ENCODE measurements at regions of chr9 and their contacts with region 1.

Region 1: DNA sequence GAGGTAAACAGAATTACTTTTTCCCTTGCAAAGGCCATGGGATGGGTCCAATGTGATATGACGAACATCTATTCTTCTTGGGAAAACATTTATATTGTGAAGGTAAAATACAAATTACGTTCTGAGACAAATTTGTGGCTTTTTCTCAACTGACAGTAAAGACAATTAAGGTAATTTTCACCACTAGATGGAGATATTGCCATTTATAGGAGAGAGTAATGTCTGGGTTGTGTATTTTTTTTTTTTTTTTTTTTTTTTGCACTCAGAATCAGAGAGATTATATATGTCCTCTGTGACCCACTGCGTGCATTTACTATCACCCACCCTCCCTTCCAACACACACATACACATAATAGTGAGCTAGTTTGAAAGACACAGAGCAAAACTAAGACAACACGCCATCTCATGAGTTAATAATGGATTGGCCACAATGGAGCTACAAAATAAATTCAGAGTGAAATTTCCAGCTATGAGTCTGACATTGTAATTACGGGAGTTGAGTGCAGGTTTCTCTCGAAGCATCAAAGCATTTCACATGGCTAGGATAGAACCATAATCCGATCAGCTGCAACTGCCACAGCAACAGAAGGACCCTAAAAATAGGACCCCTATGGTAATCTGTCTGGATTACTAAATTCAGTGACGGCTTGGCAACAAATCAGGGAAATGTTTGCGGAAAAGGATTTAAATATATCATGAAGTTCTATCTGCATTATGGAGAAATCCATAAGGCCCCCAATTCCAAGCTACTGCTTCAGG is 49.2 kb downstream of the ANXA1 start:
- DNase-seq: peak in 1 of 2 experiments; percentile 44
- ATAC-seq: peak; percentile 70 to 84; a peak in 5 of 6 replicates
- H3K4me3 ChIP-seq: no peak overlapping the region
- H3K27ac ChIP-seq: no peak overlapping the region
- H3K4me1 ChIP-seq: peaks cover 22% of the 10 kb centered on the region; the same call in 2 of the 3 replicates
- CTCF ChIP-seq: peak; percentile 83
- EP300 ChIP-seq: no peak
- POLR2A ChIP-seq: no peak
- RAD21 ChIP-seq: peak; percentile 80 to 86

Region 2: DNA sequence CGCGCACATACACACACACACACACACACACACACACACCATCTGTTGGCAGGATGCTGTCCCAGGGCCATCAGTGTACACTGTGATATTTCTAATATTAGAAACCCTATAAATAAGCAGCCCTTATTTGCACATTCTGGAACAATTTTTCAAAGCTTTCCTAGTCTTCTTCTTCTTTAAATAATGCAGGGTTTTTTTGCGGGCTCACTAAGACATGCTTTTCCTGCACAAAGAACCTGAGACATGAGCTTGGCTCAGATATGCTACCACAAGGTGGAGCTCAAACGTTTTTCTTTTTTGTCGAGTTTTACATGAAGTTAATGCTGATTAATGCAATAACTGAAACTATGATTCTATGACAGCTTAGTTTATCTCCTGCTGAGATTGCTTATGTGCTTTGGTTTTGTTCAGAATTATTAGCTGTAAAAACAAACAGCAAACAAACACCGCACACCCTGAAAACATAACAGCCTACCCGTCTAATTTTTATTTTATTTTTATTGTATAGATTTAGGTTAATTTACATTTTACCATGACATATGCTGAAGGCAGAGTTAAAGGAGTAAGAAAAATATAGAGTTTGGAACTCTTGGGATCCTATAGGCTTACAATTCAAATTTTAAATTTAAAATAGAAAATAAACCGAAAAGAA is 343.8 kb before region 1 on chr9:
- CTCF ChIA-PET with region 1: interaction called, 35 read pairs
- POLR2A ChIA-PET with region 1: interaction called, 3 read pairs
- DNase-seq: peak; percentile 66 to 92
- ATAC-seq: peak; percentile 75
- H3K4me3 ChIP-seq: no peak overlapping the region
- H3K27ac ChIP-seq: peak overlapping the region; percentile 92 to 93
- H3K4me1 ChIP-seq: peaks cover 43% of the 10 kb centered on the region
- CTCF ChIP-seq: peak; percentile 82
- EP300 ChIP-seq: no peak
- POLR2A ChIP-seq: no peak
- RAD21 ChIP-seq: peak; percentile 80 to 82

Region 3: DNA sequence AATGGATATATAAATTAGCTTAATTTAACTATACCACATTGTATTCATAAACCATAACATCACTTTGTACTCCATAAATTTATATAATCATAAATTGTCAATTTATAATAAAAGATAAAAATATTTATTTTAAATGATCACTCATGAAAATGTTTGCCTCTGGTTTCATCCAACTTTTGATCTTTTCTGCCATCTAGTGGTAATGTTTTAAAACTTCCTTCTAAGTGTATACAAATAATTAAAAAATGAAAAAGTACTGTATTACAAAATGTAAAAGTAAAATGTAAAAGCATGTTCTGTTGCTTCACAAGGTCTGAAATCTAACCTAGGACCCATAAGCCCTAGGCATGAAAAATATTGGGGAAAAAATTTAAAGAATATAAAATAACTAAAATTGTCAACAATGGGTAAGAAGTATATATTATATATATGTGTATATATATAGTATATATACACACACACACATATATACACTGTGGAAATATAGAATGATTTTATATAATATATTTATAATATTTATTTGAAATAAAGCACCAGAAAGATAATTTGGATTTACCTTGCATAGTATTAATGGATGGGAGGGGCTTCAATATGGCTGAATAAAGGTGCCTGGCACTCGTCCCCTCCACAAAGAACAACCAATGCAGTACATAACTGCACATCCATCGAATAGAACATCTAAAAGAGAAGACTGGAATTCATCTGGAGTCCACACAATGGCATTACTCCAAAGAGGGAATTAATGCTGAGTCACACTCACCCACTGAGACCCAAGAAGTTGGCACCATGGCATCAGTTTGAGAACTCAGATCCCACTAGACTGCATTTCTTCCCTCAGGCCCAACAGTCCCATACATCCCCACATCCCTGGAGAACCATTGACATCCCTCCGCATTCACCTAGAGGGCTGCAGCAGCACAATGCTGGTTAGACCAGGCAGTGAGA is 16.7 kb before region 1 on chr9:
- CTCF ChIA-PET with region 1: interaction called, 19 read pairs
- POLR2A ChIA-PET with region 1: no interaction called
- DNase-seq: peak in 1 of 2 experiments; percentile 65
- ATAC-seq: no peak
- H3K4me3 ChIP-seq: 0 out of 3 replicates have a peak overlapping the region, but pooled peaks have one; percentile 39
- H3K27ac ChIP-seq: peak overlapping the region; percentile 85 to 88
- H3K4me1 ChIP-seq: peaks cover 55% of the 10 kb centered on the region
- CTCF ChIP-seq: peak; percentile 66; the same call in 2 of the 3 replicates
- EP300 ChIP-seq: no peak
- POLR2A ChIP-seq: no peak
- RAD21 ChIP-seq: peak; percentile 80 to 89

Region 4: GRCh38 chr9:73216100-73216499 is 15.2 kb after region 1 on chr9:
- CTCF ChIA-PET with region 1: interaction called, 36 read pairs
- POLR2A ChIA-PET with region 1: no interaction called
- DNase-seq: no peak
- ATAC-seq: no peak
- H3K4me3 ChIP-seq: no peak overlapping the region
- H3K27ac ChIP-seq: no peak overlapping the region
- H3K4me1 ChIP-seq: no peaks in the 10 kb centered on the region
- CTCF ChIP-seq: no peak
- EP300 ChIP-seq: no peak
- POLR2A ChIP-seq: no peak
- RAD21 ChIP-seq: no peak